ENCODE measurements at regions of chr3 and their contacts with region 1.

Region 1: DNA sequence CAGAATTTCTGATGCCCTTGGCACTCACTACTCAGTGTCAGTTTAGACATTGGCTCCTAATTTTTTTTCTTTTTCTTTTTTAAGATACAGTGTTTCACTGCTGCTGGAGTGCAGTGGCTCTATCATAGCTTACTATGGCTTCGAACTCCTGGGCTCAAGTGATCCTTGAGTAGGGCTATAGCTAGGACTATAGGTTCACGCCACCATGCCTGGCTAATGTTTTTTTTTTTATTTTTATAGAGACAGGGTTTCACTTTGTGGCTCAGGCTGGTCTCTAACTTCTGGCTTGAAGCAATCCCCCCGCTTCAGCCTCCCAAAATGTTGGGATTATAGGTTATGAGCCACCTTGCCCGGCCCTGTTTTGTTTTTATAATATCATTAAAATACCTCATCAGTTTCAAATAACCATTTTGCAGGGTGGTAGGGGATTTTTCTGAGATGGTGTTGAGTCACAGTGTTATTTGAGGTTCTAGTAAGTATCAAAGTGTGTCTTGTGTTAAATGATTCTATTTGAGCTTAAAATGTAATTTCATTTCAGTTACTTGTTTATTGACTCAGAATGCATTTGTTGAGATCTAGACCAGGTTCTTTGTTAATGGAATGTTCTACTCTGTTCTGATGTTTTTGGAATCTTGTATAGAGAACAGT is 7.0 kb downstream of the FNDC3B start:
- DNase-seq: no peak
- ATAC-seq: no peak
- H3K4me3 ChIP-seq: no peak overlapping the region
- H3K27ac ChIP-seq: no peak overlapping the region
- H3K4me1 ChIP-seq: peaks cover 67% of the 10 kb centered on the region
- H3K27me3 ChIP-seq: no peaks in the 10 kb centered on the region
- CTCF ChIP-seq: no peak

Region 2: GRCh38 chr3:172115787-172116186 is 69.4 kb after region 1 on chr3:
- intact Hi-C with region 1: loop called (anchors 5 to 10 kb)
- DNase-seq: no peak
- ATAC-seq: no peak
- H3K4me3 ChIP-seq: no peak overlapping the region
- H3K27ac ChIP-seq: no peak overlapping the region
- H3K4me1 ChIP-seq: no peaks in the 10 kb centered on the region
- H3K27me3 ChIP-seq: no peaks in the 10 kb centered on the region
- CTCF ChIP-seq: no peak

Region 3: DNA sequence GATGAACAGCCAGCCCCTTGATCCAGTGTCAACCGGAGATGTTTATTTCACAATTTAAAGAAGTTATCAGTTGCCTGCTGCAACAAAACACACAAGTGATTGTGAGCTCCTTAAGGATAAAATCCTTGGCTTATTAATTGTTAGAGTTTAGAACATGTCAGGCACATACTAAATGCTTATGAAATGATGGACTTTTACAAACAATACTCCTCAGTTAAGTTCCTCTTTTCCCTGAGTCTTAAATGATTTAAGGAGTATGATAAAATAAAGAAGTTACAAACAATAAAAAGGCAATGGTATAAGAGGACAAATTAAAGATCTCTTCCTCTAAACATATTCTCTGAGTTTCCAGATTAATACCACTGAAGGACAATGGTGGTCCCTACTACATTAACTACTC is 396.2 kb after region 1 on chr3:
- intact Hi-C with region 1: no loop called
- DNase-seq: no peak
- ATAC-seq: no peak
- H3K4me3 ChIP-seq: no peak overlapping the region
- H3K27ac ChIP-seq: no peak overlapping the region
- H3K4me1 ChIP-seq: no peaks in the 10 kb centered on the region
- H3K27me3 ChIP-seq: peaks cover 3 to 20% (median 4%) of the 10 kb centered on the region in 3 donors
- CTCF ChIP-seq: no peak